OCI-LY7 (cell line): ENCODE measurements at regions of chr20 and their contacts with region 1.

Region 1: GRCh38 chr20:54097236-54097529 is 26.8 kb upstream of the BCAS1 start:
- DNase-seq: no peak
- H3K4me3 ChIP-seq: no peak overlapping the region
- H3K27ac ChIP-seq: no peak overlapping the region
- H3K4me1 ChIP-seq: no peaks in the 10 kb centered on the region
- CTCF ChIP-seq: no peak

Region 2: DNA sequence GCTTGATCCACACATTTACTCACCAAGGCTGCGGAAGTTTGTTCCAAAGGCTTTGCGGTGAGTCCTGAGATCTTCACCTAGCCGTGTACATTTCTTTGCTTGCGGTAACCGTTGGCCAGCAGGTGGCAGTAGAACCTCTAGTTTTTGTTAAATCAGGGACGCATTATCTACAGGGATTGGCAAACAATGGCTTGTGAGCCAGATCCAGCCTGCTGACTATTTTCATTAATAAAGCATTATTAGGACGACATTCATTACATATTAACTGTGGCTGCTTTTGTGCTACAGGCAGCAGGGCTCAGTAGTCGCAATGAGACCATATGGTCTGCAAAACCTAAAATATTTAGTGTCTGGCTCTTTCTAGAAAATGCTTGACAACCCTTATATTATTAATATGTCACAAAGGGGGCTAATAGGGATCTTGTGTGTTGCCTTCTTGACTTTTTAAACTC is 552.4 kb after region 1 on chr20:
- CTCF ChIA-PET with region 1: no interaction called
- POLR2A ChIA-PET with region 1: no interaction called
- intact Hi-C with region 1: loop called (anchors 2 kb)
- DNase-seq: peak; percentile 66
- H3K4me3 ChIP-seq: no peak overlapping the region
- H3K27ac ChIP-seq: no peak overlapping the region
- H3K4me1 ChIP-seq: no peaks in the 10 kb centered on the region
- CTCF ChIP-seq: peak; percentile 91